ENCODE measurements at regions of chr10 and their contacts with region 1.

Region 1: GRCh38 chr10:89269433-89270152 is 18.0 kb upstream of the LIPA start:
- DNase-seq: no peak
- ATAC-seq: no peak
- H3K4me3 Mint-ChIP-seq: no peak overlapping the region
- H3K27ac Mint-ChIP-seq: no peak overlapping the region
- H3K4me1 Mint-ChIP-seq: no peaks in the 10 kb centered on the region
- H3K27me3 Mint-ChIP-seq: peaks cover 7% of the 10 kb centered on the region
- CTCF ChIP-seq: no peak

Region 2: GRCh38 chr10:89369156-89370105 is 99.8 kb after region 1 on chr10:
- CTCF ChIA-PET with region 1: interaction called, 13 read pairs
- POLR2A ChIA-PET with region 1: no interaction called
- intact Hi-C with region 1: no loop called
- DNase-seq: no peak
- ATAC-seq: no peak
- H3K4me3 Mint-ChIP-seq: no peak overlapping the region
- H3K27ac Mint-ChIP-seq: no peak overlapping the region
- H3K4me1 Mint-ChIP-seq: peaks cover 6% of the 10 kb centered on the region
- H3K27me3 Mint-ChIP-seq: peaks cover 2% of the 10 kb centered on the region
- CTCF ChIP-seq: no peak

Measured in activated B cell treated with CpG ODN at 0.5 μM for 24 hours (primary cell).